ENCODE measurements at regions of chr2 and their contacts with region 1.

Region 1: DNA sequence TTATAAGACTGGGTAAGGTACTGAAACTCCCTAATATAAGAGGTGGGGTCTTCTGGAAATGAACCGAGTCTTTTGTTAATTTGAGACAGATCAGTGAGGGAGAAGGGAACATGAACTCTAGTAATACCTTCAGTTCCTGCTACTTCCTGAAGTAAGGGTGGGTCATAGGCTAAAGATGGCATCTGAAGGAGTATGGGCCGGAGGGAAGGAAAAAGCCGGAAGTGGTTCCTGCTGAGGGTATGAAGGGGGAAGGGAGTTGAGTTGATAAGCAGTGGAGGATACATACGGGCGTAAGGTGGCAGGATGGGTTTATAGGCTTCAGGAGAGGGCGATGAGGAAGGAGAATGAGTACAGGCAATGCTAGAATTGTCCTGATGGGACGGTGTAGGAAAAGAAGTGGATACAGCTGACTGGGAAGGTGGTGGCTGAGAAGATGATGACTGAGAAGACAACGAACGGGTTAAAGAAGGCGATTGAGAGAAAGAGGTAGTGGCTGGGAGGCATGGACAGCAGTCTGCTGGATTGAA is 58.2 kb downstream of the KYNU start:
- DNase-seq: no peak

Region 2: GRCh38 chr2:142280831-142281230 is 654.8 kb before region 1 on chr2:
- intact Hi-C with region 1: loop called in 1 of 2 experiments (anchors 2 kb)
- DNase-seq: no peak

Measured in posterior vena cava (tissue), 2 donors.